ENCODE measurements at regions of chr2 and their contacts with region 1.

Region 1: GRCh38 chr2:108607706-108608301 is 73.5 kb downstream of the LIMS1 start:
- DNase-seq: peak; percentile 68
- ATAC-seq: no peak
- H3K4me3 ChIP-seq: no peak overlapping the region
- H3K4me3 Mint-ChIP-seq: no peak overlapping the region
- H3K27ac ChIP-seq: no peak overlapping the region
- H3K27ac Mint-ChIP-seq: no peak overlapping the region
- H3K4me1 ChIP-seq: peaks cover 40 to 50% of the 10 kb centered on the region in 2 donors
- H3K4me1 Mint-ChIP-seq: peaks cover 45% of the 10 kb centered on the region
- H3K27me3 ChIP-seq: peaks cover 0 to 3% (median 0%) of the 10 kb centered on the region in 4 experiments
- H3K27me3 Mint-ChIP-seq: no peaks in the 10 kb centered on the region
- CTCF ChIP-seq: peak; percentile 82

Region 2: DNA sequence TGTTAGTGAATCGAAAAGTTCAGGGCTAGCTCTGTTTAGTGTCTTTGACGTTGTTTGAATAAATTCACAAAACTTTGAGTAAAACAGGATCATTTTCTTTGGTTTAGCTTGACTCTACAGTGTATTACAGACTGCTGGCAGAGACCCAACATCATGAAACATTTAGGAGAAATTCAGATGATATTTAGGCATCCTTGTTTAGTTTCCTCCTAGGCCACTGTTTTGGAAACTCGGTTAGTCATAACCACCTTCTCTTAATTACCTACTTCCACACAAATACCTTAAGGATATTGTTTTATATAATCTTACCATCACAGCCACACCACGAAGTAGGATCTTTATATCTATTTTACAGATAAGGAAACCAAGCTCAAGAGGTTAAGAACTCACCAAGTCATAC is 65.7 kb before region 1 on chr2:
- CTCF ChIA-PET with region 1: no interaction called
- POLR2A ChIA-PET with region 1: no interaction called
- intact Hi-C with region 1: no loop called
- DNase-seq: no peak
- ATAC-seq: no peak
- H3K4me3 ChIP-seq: no peak overlapping the region
- H3K4me3 Mint-ChIP-seq: no peak overlapping the region
- H3K27ac ChIP-seq: no peak overlapping the region
- H3K27ac Mint-ChIP-seq: no peak overlapping the region
- H3K4me1 ChIP-seq: no peaks in the 10 kb centered on the region
- H3K4me1 Mint-ChIP-seq: peaks cover 3% of the 10 kb centered on the region
- H3K27me3 ChIP-seq: no peaks in the 10 kb centered on the region
- H3K27me3 Mint-ChIP-seq: no peaks in the 10 kb centered on the region
- CTCF ChIP-seq: no peak

Region 3: DNA sequence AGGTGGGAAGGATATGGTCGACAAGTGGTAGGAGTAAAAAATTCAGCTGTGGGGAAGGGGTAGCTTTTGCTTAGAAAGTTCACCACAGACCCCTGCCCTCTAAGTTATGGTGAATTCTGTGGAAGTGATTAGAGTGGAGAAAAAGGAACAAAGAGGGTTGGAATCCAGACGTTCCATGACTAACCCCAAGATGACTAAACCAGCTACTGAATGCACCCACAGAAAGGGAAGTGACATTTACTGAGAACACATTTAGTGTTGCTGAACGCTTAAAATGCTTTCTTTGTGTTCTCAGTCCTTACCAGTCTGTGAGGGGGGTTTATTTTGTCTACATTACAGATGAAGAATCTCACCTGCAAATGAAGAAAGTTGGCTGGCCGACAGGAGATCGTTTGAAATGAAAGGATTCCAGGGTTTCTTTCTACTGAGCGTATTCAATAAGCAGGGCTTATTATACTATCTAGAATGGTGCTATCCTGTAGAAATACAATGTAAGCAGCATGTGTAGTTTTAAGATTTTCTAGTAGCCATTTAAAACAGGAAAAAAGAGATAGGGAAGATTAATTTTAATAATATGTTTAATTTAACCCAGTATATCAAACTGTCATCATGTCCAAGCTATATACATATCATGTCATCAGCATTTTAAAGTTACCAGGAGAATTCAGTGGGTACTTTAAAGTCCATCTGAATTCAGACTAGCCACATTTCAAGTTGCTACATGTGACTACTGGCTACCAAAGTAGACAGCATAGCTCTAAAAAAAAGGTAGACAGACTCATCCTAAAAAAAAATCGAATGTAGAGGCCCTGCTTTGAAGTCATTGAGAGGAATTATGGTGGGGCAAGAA is 13.4 kb before region 1 on chr2:
- CTCF ChIA-PET with region 1: interaction called, 11 read pairs
- POLR2A ChIA-PET with region 1: interaction called, 4 read pairs
- intact Hi-C with region 1: loop called (anchors 2 kb)
- DNase-seq: peak; percentile 62
- ATAC-seq: peak; percentile 69
- H3K4me3 ChIP-seq: no peak overlapping the region
- H3K4me3 Mint-ChIP-seq: peak overlapping the region; percentile 62
- H3K27ac ChIP-seq: peak overlapping the region in 1 of 2 donors; percentile 24
- H3K27ac Mint-ChIP-seq: peak overlapping the region; percentile 77
- H3K4me1 ChIP-seq: peaks cover 49 to 50% of the 10 kb centered on the region in 2 donors
- H3K4me1 Mint-ChIP-seq: peaks cover 69% of the 10 kb centered on the region
- H3K27me3 ChIP-seq: no peaks in the 10 kb centered on the region
- H3K27me3 Mint-ChIP-seq: no peaks in the 10 kb centered on the region
- CTCF ChIP-seq: no peak

Region 4: GRCh38 chr2:108621087-108621559 is 13.3 kb after region 1 on chr2:
- CTCF ChIA-PET with region 1: interaction called, 18 read pairs
- POLR2A ChIA-PET with region 1: interaction called, 10 read pairs
- intact Hi-C with region 1: loop called (anchors 1 kb)
- DNase-seq: peak; percentile 81
- ATAC-seq: peak; percentile 99
- H3K4me3 ChIP-seq: peak overlapping the region in 4 of 5 experiments; percentile 30 to 72 (median 42)
- H3K4me3 Mint-ChIP-seq: peak overlapping the region; percentile 77
- H3K27ac ChIP-seq: peak overlapping the region; percentile 58 to 69
- H3K27ac Mint-ChIP-seq: peak overlapping the region; percentile 84
- H3K4me1 ChIP-seq: peaks cover 51 to 53% of the 10 kb centered on the region in 2 donors
- H3K4me1 Mint-ChIP-seq: peaks cover 53% of the 10 kb centered on the region
- H3K27me3 ChIP-seq: no peaks in the 10 kb centered on the region
- H3K27me3 Mint-ChIP-seq: no peaks in the 10 kb centered on the region
- CTCF ChIP-seq: no peak

Region 5: DNA sequence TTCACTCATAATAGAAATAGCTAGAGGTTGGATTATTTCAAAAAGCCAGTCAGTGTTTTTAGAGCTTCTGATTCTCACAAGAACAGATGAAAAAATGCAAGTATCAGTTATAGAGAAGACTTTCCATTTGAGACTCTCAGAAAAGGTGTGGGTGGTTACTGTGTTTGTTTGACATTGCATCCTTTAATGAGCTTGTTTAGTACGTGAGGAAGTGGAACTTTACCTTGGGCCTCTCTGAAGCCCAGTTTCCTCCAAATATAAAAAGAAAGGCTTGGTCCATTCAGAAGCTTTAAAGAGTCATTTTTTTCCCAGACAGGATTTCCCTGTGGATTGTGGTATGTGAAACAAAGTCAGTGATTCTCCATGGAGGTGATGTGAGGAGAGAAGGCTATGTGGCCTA is 21.6 kb after region 1 on chr2:
- CTCF ChIA-PET with region 1: interaction called, 290 read pairs
- POLR2A ChIA-PET with region 1: interaction called, 4 read pairs
- intact Hi-C with region 1: loop called (anchors 2 kb)
- DNase-seq: peak; percentile 41
- ATAC-seq: peak; percentile 62
- H3K4me3 ChIP-seq: no peak overlapping the region
- H3K4me3 Mint-ChIP-seq: peak overlapping the region; percentile 34
- H3K27ac ChIP-seq: peak overlapping the region in 1 of 2 donors; percentile 46
- H3K27ac Mint-ChIP-seq: peak overlapping the region; percentile 50
- H3K4me1 ChIP-seq: peaks cover 32% of the 10 kb centered on the region in 2 donors
- H3K4me1 Mint-ChIP-seq: peaks cover 49% of the 10 kb centered on the region
- H3K27me3 ChIP-seq: no peaks in the 10 kb centered on the region
- H3K27me3 Mint-ChIP-seq: peaks cover 5% of the 10 kb centered on the region
- CTCF ChIP-seq: no peak

Region 6: DNA sequence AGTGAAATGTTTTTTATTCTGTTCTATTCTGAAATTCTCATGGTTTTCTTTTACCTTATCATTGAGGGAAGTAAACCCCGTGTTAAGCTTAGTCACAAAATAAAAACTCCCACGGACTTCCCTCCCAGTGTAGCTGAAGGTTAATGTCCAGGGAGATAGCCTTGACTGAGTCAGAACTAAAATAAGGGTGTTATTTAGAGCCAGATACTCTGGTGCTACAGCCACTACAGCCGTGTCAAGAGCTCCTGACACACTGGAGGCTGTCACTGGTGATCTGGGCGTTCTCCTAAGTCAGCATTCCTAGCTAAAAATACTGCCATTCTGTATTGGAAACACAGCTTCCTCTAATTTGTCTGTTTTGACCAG is 29.5 kb after region 1 on chr2:
- CTCF ChIA-PET with region 1: interaction called, 290 read pairs
- POLR2A ChIA-PET with region 1: interaction called, 6 read pairs
- intact Hi-C with region 1: loop called (anchors 1 kb)
- DNase-seq: no peak
- ATAC-seq: no peak
- H3K4me3 ChIP-seq: no peak overlapping the region
- H3K4me3 Mint-ChIP-seq: no peak overlapping the region
- H3K27ac ChIP-seq: no peak overlapping the region
- H3K27ac Mint-ChIP-seq: no peak overlapping the region
- H3K4me1 ChIP-seq: peaks cover 4 to 6% of the 10 kb centered on the region in 2 donors
- H3K4me1 Mint-ChIP-seq: peaks cover 15% of the 10 kb centered on the region
- H3K27me3 ChIP-seq: no peaks in the 10 kb centered on the region
- H3K27me3 Mint-ChIP-seq: peaks cover 5% of the 10 kb centered on the region
- CTCF ChIP-seq: no peak

Region 7: DNA sequence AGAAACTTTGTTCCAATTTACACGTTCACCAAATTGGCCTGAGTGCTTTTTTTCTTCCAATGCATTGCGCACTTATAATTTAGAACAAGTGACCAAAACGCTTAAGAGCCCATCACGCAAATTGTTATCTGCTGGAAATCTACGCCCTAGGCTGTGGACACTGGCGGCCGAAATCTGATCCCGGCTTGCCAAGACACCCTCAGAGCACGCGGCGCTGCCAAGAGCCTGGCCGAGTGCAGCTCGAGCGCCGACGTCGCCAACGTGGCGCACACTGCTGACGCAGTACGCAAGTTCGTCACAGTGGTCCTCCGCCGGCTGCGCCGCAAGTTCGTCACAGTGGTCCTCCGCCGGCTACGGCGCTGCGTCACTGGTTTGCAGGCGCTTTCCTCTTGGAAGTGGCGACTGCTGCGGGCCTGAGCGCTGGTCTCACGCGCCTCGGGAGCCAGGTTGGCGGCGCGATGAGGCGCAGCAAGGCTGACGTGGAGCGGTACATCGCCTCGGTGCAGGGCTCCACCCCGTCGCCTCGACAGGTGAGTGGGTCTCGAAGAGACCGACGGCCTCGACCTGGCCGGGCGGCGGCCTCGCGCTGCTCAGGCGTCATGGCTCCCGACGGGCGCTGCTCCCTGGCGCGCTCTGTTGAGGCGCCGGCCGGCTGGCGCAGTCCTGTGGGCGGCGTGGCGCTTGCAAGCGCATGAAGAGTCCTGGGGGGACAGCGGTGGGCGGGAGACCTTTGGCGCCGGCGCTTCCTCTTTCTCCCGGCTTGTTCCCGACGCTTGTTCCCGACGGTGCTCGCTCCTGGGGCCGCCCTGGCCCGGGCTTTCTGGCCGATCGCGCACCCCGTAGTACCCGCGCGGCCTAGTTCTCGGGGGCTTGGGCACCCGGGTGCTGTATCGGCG is 111.6 kb after region 1 on chr2 and contains the start of gene RANBP2:
- CTCF ChIA-PET with region 1: no interaction called
- POLR2A ChIA-PET with region 1: no interaction called
- intact Hi-C with region 1: loop called (anchors 2 kb)
- DNase-seq: peak; percentile 97
- ATAC-seq: peak; percentile 97
- H3K4me3 ChIP-seq: peak within 1 kb of the TSS; percentile 65 to 94 (median 85)
- H3K4me3 Mint-ChIP-seq: peak within 1 kb of the TSS; percentile 98
- H3K27ac ChIP-seq: peak within 1 kb of the TSS; percentile 83 to 89
- H3K27ac Mint-ChIP-seq: peak within 1 kb of the TSS; percentile 98
- H3K4me1 ChIP-seq: peaks cover 7 to 18% of the 10 kb centered on the region in 2 donors
- H3K4me1 Mint-ChIP-seq: peaks cover 22% of the 10 kb centered on the region
- H3K27me3 ChIP-seq: no peaks in the 10 kb centered on the region
- H3K27me3 Mint-ChIP-seq: no peaks in the 10 kb centered on the region
- CTCF ChIP-seq: no peak
- total RNA-seq, gene RANBP2: 67.0 and 69.5 TPM in 2 replicates

Region 8: GRCh38 chr2:108786354-108787199 is 178.8 kb after region 1 on chr2 and contains the start of gene CCDC138:
- CTCF ChIA-PET with region 1: no interaction called
- POLR2A ChIA-PET with region 1: no interaction called
- intact Hi-C with region 1: loop called (anchors 5 kb)
- DNase-seq: peak; percentile 92
- ATAC-seq: peak; percentile 97
- H3K4me3 ChIP-seq: peak within 1 kb of the TSS; percentile 61 to 88 (median 70)
- H3K4me3 Mint-ChIP-seq: peak within 1 kb of the TSS; percentile 99
- H3K27ac ChIP-seq: peak within 1 kb of the TSS; percentile 69 to 86
- H3K27ac Mint-ChIP-seq: peak within 1 kb of the TSS; percentile 91
- H3K4me1 ChIP-seq: peaks cover 6 to 7% of the 10 kb centered on the region in 2 donors
- H3K4me1 Mint-ChIP-seq: peaks cover 12% of the 10 kb centered on the region
- H3K27me3 ChIP-seq: no peaks in the 10 kb centered on the region
- H3K27me3 Mint-ChIP-seq: no peaks in the 10 kb centered on the region
- CTCF ChIP-seq: no peak
- total RNA-seq, gene CCDC138: 11.4 and 16.3 TPM in 2 replicates

Measured in B cell (primary cell).